ENCODE measurements at regions of chr15 and their contacts with region 1.

Region 1: DNA sequence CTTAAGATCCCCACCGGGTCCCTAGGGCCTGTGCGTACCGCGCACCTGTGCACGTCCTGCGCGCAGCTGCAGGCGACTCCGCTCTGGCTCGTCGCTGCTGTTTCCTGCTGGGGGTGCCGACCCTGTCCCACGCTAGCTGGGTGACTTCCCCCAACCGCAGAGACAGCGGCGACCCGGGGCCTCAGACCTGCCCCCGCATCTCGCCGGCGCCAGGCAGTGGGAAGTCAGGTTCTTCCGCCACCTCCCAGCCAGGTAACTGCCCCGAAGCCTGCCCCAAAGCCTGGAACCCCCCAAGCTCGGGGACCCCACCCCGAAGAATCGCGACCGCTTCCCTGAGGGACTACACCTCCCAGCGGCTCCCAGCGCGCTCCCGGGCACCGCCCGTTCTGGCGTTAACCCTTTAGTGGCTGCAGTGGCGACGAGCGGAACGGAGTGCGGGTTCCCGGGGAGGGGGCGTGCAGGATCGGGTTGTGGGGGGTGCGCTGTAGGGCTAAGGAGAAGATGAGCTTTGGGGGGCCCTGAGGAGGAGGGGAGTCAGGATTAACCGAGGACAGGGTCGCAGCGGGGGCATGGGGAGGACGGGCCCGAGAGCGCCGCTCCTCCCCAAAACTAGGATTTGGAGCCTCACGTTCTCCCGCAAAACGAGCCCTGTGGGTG is 511 bp downstream of the NEIL1 start:
- DNase-seq: peak; percentile 67 to 96 (median 80)

Region 2: DNA sequence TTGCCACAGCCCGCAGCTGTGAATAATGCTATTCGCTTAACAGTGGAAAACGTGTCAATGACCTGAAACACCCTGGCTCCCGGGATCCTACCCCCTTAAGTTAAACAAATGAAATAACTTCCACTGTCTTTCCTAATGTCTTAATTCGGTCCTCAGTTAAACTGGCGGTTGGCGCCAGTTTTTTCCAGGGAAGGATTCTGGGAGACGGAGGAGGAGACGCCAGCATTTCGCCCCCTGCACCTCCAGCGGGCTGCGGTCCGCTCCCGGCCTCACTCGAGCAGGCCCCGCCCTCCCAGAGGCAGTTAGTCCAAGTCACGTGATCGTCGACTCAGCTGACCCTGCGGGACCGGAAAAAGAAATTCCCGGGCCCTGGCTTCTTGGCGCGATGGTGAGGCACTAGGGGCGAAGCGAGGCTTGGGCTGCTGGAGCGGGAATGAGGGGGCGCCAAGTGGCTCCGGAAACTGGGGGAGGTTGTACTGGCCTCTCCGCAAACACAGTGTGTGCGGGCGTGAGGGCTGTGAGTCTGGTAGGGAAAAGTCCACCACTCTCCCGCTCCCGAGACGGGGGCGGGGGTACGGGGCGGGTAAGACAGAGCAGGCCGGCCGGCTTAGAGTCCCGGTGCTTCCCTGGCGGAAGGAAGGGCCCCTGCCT is 11.5 kb before region 1 on chr15 and contains the start of gene COMMD4:
- intact Hi-C with region 1: loop called (anchors 1 kb)
- DNase-seq: peak; percentile 93 to 99 (median 96)

Measured in posterior cingulate gyrus (tissue), 11 donors.